Common myeloid progenitor, CD34-positive (primary cell): ENCODE measurements at regions of chr4 and their contacts with region 1.

Region 1: GRCh38 chr4:68271851-68272756 is 26.6 kb upstream of the TMPRSS11B start:
- DNase-seq: peak; percentile 48 to 72 (median 66)
- H3K4me3 ChIP-seq: peak overlapping the region in 2 of 7 experiments; percentile 23 to 42
- H3K27ac ChIP-seq: no peak overlapping the region
- H3K4me1 ChIP-seq: peaks cover 2 to 14% (median 7%) of the 10 kb centered on the region in 4 experiments
- H3K27me3 ChIP-seq: no peaks in the 10 kb centered on the region

Region 2: GRCh38 chr4:68375667-68376559 is 103.8 kb after region 1 on chr4:
- CTCF ChIA-PET with region 1: interaction called, 19 read pairs
- POLR2A ChIA-PET with region 1: no interaction called
- DNase-seq: peak; percentile 69 to 81 (median 81)
- H3K4me3 ChIP-seq: peak overlapping the region in 6 of 7 experiments; percentile 34 to 80 (median 59)
- H3K27ac ChIP-seq: no peak overlapping the region
- H3K4me1 ChIP-seq: peaks cover 0 to 10% (median 4%) of the 10 kb centered on the region in 4 experiments
- H3K27me3 ChIP-seq: no peaks in the 10 kb centered on the region